PC-9 (cell line): ENCODE measurements at regions of chr18 and their contacts with region 1.

Region 1: GRCh38 chr18:3447895-3448837 is 1.8 kb upstream of the TGIF1 start:
- DNase-seq: peak; percentile 95 to 98
- H3K4me3 ChIP-seq: peak overlapping the region; percentile 83
- H3K27ac ChIP-seq: peak overlapping the region; percentile 96
- H3K4me1 ChIP-seq: peaks cover 35% of the 10 kb centered on the region
- H3K27me3 ChIP-seq: no peaks in the 10 kb centered on the region
- CTCF ChIP-seq: no peak; the same call in 1 of the 2 replicates

Region 2: DNA sequence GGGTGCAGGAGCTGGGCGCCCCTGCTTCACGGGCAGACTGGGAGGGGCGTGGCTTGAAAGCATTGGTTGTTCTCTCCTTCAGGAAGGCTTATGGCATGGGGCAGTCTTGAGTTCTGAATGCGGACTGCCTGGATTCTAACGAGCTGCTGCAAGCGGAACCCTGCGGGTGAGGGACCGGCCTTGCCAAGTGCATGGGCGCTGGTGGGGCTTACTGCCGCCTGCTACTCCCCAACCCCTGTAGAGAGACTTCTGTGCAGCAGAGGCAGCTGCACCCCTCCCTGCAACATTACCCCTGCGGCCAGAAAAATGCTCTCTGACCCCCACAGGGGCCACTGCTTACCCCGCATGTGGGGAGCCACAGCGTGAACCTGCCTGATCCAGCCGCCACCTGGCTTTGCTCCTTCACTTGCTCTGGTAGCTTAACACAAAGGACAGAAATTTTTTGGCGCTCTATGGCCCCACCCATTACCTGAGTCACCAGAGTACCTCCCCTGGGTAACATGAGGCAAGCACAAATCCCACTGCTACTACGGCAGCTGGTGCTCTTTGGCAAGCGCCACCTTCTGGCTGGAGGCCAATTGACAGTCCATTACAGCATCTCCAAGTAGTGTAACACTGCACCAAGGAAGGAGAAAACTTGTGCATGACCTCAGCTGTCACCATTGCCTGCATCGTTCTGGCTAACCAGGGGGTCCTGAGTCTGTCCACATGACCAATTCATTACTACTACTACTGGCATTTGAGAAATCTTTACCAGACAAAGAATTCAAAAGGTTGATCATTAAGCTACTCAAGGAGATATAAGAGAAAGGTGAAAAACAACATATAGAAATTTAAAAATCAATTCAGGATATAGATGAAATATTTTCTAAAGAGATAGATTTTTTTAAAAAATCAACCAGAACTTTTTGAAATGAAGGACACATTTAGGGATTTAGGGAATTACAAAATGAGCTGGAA is 150.9 kb before region 1 on chr18:
- CTCF ChIA-PET with region 1: no interaction called
- POLR2A ChIA-PET with region 1: interaction called, 8 read pairs
- intact Hi-C with region 1: loop called (anchors 1 kb)
- DNase-seq: peak; percentile 94 to 95
- H3K4me3 ChIP-seq: peak overlapping the region; percentile 77
- H3K27ac ChIP-seq: peak overlapping the region; percentile 68
- H3K4me1 ChIP-seq: 0 out of 2 replicates have a peak, but pooled peaks cover 8% of the 10 kb centered on the region
- H3K27me3 ChIP-seq: no peaks in the 10 kb centered on the region
- CTCF ChIP-seq: peak; percentile 72

Region 3: GRCh38 chr18:3380384-3380961 is 67.7 kb before region 1 on chr18:
- CTCF ChIA-PET with region 1: interaction called, 7 read pairs
- POLR2A ChIA-PET with region 1: interaction called, 17 read pairs
- intact Hi-C with region 1: loop called (anchors 1 kb)
- DNase-seq: peak in 1 of 2 experiments; percentile 81
- H3K4me3 ChIP-seq: peak overlapping the region; percentile 35; the same call in 1 of the 2 replicates
- H3K27ac ChIP-seq: peak overlapping the region; percentile 99
- H3K4me1 ChIP-seq: peaks cover 64% of the 10 kb centered on the region
- H3K27me3 ChIP-seq: no peaks in the 10 kb centered on the region
- CTCF ChIP-seq: peak; percentile 44; the same call in 1 of the 2 replicates

Region 4: GRCh38 chr18:3623769-3624545 is 175.8 kb after region 1 on chr18:
- CTCF ChIA-PET with region 1: no interaction called
- POLR2A ChIA-PET with region 1: interaction called, 10 read pairs
- intact Hi-C with region 1: loop called (anchors 1 kb)
- DNase-seq: peak; percentile 94 to 98
- H3K4me3 ChIP-seq: peak overlapping the region; percentile 58
- H3K27ac ChIP-seq: peak overlapping the region; percentile 100
- H3K4me1 ChIP-seq: peaks cover 62% of the 10 kb centered on the region
- H3K27me3 ChIP-seq: no peaks in the 10 kb centered on the region
- CTCF ChIP-seq: no peak

Region 5: DNA sequence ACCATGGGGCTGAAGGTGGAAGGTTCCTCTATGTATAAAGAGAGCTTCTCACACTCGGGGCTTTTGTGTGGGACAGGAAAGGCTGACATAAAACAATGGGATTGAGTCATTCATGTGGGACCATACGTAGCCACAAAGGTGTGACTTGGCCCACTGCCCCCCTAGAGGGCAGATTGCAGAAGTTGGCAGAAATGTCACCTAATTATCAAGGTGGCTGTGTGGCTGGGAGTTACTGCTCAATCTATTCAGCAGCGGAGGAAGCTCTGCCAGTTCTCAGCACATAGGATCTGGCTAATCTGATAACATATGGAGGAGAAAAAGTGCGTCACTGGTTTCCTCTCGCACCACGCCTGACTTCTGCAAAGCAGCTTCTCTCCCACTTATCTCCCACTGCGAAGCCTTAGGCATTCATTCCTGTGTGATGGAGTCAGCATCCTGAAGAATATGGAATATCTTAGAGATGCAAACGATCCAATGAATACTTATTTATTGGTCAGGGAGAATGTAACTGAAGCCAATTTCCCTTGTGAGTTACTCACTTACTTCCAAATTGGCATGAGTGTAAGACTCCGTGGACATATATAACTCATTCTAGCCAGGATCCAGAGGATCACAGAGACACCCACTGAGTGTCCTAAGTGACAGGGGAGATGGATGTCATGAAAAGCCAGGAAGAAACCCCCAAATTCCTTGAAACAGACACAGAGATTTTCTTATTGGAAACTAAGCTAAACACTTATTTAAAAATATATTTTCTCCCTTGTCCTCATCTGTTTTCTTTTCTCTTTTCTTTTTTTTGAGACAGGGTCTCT is 346.6 kb after region 1 on chr18:
- CTCF ChIA-PET with region 1: no interaction called
- POLR2A ChIA-PET with region 1: no interaction called
- intact Hi-C with region 1: loop called (anchors 5 kb)
- DNase-seq: peak; percentile 87 to 88
- H3K4me3 ChIP-seq: peak overlapping the region; percentile 20; the same call in 1 of the 2 replicates
- H3K27ac ChIP-seq: peak overlapping the region; percentile 93
- H3K4me1 ChIP-seq: peaks cover 26% of the 10 kb centered on the region
- H3K27me3 ChIP-seq: no peaks in the 10 kb centered on the region
- CTCF ChIP-seq: no peak; the same call in 1 of the 2 replicates

Region 6: DNA sequence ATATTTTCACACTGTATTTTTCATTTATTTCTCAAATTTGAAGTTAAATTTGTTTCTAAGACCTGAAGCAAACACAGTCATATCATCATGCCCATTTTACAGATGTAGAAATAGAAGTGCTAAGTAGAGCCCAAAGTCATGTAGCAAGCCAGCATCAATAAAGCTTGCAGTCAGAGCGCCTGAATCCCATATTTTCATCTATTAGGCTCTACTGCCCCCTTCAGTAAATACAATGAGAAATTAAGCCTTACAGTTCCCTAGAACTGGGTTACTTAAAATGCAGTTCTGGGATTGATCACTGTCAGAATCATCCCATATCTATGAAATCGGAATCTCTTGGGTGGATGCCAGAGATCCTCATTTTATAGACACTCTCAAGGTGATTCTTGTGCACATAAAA is 421.7 kb after region 1 on chr18:
- CTCF ChIA-PET with region 1: no interaction called
- POLR2A ChIA-PET with region 1: no interaction called
- intact Hi-C with region 1: loop called (anchors 10 kb)
- DNase-seq: no peak
- H3K4me3 ChIP-seq: no peak overlapping the region
- H3K27ac ChIP-seq: no peak overlapping the region
- H3K4me1 ChIP-seq: no peaks in the 10 kb centered on the region
- H3K27me3 ChIP-seq: no peaks in the 10 kb centered on the region
- CTCF ChIP-seq: peak; percentile 78

Region 7: DNA sequence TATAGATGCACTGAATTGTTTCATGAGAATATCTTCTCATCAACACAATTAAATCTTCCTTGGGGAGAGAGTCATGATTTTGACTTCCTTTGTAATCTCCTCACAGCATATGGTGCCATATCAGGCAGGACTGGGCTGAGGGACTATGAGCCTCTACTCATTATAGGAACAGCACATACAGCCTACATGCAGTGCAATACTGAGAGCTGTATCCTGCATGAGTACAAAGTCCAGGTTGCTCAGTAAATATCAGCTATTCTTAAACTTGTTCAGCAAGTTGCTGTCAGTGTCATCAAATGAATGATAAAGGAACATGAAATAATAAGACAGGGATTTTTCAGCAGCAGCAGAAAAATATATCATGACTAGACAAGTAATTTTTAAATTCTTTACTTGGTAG is 996.1 kb after region 1 on chr18:
- CTCF ChIA-PET with region 1: no interaction called
- POLR2A ChIA-PET with region 1: no interaction called
- intact Hi-C with region 1: no loop called
- DNase-seq: no peak
- H3K4me3 ChIP-seq: no peak overlapping the region
- H3K27ac ChIP-seq: no peak overlapping the region
- H3K4me1 ChIP-seq: no peaks in the 10 kb centered on the region
- H3K27me3 ChIP-seq: peaks cover 33% of the 10 kb centered on the region
- CTCF ChIP-seq: no peak